Activated CD4-positive, alpha-beta T cell treated with anti-CD3 and anti-CD28 coated beads, Interleukin-2, amount 10 ng/mL, durations not matched to agents 7 days and 5 days (primary cell): ENCODE measurements at regions of chr19 and their contacts with region 1.

Region 1: GRCh38 chr19:14136509-14137281 is at the start of gene ASF1B:
- DNase-seq: peak; percentile 99
- H3K4me3 Mint-ChIP-seq: peak within 1 kb of the TSS; percentile 81
- H3K27ac Mint-ChIP-seq: peak within 1 kb of the TSS; percentile 93
- H3K4me1 Mint-ChIP-seq: peaks cover 44% of the 10 kb centered on the region
- H3K27me3 Mint-ChIP-seq: no peaks in the 10 kb centered on the region
- total RNA-seq, gene ASF1B: 119 to 131 TPM

Region 2: GRCh38 chr19:13861732-13862531 is 274.8 kb before region 1 on chr19:
- CTCF ChIA-PET with region 1: interaction called, 15 read pairs
- POLR2A ChIA-PET with region 1: no interaction called
- DNase-seq: peak; percentile 88
- H3K4me3 Mint-ChIP-seq: peak overlapping the region; percentile 80
- H3K27ac Mint-ChIP-seq: peak overlapping the region; percentile 85
- H3K4me1 Mint-ChIP-seq: peaks cover 44% of the 10 kb centered on the region
- H3K27me3 Mint-ChIP-seq: peaks cover 27% of the 10 kb centered on the region

Region 3: DNA sequence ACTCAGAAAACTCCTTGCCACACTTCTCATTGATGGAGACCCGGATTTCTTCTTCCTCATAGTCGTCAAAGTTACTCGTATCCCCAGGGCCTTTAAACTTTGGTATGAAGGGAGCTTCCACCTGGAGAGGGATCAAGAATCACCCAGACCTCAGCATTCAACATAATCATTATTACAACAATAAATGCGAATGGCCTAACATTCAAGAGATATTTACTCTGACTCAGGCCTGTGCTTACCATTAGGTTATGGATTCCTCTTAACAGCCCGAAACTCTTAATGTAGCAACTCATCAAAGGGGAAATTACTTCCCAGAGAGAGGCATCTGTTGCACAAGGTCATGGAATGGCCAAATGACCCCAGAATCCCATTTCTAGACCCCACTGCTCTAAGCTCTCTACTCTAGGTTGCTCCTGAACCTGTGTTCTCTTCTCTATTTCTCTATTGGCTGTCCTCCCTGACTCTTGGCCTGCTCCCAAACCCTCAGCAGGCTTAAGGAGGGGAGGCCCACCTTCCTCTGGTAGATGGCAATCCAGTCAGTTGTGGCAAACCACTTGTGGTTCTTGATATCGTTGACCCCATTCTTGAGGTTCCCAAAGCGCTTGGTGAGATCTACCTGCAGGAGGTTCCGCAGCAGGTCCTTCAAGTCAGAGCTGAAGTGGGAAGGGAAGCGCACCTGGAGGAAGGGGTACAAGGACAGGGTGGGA is 43.4 kb before region 1 on chr19:
- CTCF ChIA-PET with region 1: interaction called, 11 read pairs
- POLR2A ChIA-PET with region 1: interaction called, 3 read pairs
- DNase-seq: no peak
- H3K4me3 Mint-ChIP-seq: peak overlapping the region; percentile 45
- H3K27ac Mint-ChIP-seq: peak overlapping the region; percentile 61
- H3K4me1 Mint-ChIP-seq: peaks cover 24% of the 10 kb centered on the region
- H3K27me3 Mint-ChIP-seq: no peaks in the 10 kb centered on the region

Region 4: DNA sequence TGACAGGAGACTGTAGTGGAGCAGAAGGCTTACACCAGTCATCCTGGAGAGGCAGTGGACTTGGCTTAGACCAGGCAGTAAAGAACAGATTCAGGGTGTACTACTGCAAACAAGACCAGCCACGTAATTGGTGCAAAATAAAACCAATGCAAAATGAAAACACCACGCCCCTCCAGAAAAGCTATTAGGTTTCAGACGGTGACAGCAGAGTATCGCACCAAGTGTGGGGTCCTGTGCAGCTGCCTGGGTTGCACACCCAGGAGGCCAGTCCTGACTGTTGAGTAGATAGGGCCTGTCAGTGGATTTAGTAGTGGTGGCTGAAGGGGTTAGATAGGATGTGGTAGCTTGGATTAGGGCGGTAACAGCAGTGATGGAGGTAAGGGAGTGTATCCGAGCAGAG is 13.8 kb before region 1 on chr19:
- CTCF ChIA-PET with region 1: interaction called, 20 read pairs
- POLR2A ChIA-PET with region 1: no interaction called
- DNase-seq: no peak
- H3K4me3 Mint-ChIP-seq: no peak overlapping the region
- H3K27ac Mint-ChIP-seq: no peak overlapping the region
- H3K4me1 Mint-ChIP-seq: peaks cover 16% of the 10 kb centered on the region
- H3K27me3 Mint-ChIP-seq: no peaks in the 10 kb centered on the region

Region 5: GRCh38 chr19:14237014-14237941 is 100.6 kb after region 1 on chr19:
- CTCF ChIA-PET with region 1: no interaction called
- POLR2A ChIA-PET with region 1: no interaction called
- DNase-seq: no peak
- H3K4me3 Mint-ChIP-seq: no peak overlapping the region
- H3K27ac Mint-ChIP-seq: no peak overlapping the region
- H3K4me1 Mint-ChIP-seq: peaks cover 6% of the 10 kb centered on the region
- H3K27me3 Mint-ChIP-seq: peaks cover 3% of the 10 kb centered on the region

Region 6: GRCh38 chr19:14347999-14348889 is 211.5 kb after region 1 on chr19:
- CTCF ChIA-PET with region 1: interaction called, 15 read pairs
- POLR2A ChIA-PET with region 1: no interaction called
- DNase-seq: peak; percentile 64
- H3K4me3 Mint-ChIP-seq: peak overlapping the region; percentile 22
- H3K27ac Mint-ChIP-seq: peak overlapping the region; percentile 88
- H3K4me1 Mint-ChIP-seq: peaks cover 27% of the 10 kb centered on the region
- H3K27me3 Mint-ChIP-seq: no peaks in the 10 kb centered on the region

Region 7: DNA sequence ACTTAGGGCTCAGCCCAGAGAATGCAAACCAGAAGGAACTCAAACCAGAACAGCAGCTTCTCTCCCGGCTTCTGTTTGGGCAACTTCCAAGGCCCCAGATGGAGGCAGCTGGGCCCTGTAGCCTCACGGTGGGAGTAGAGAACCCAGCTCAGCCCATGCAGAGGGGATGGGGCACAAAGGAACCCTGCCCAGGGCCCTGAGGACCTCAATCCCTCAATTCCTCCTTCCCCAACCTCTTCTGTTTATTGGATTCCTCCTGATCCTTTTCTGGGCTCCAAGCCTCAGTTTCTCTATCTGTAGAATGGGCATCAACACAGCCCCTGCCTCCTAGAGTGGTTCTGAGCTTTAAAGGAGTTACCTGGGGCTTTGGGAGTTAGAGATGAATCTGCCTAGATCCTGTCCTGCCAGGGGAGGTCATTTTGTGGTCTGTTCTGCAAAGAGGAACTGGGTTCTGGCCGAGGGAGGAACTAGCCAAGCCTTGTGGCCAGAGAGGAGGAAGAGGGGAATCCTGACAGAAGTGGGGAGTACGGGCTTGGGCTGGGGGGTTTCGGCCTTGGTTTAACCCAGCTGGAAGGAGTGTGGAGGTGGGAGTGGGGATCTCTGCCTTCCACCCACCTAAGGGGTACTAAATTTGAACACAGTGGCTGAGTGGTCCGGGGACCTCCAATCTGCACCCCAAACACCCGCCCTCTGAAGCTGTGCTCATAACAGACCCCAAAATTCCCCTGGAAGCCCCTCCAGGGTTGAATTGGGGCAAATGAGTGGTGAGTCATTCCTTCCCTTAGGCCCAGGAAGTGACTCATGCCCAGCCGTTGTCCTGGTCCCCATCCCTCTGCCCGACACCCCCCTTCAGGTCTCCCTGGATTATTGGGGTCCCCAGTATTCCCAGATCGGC is 247.2 kb after region 1 on chr19:
- CTCF ChIA-PET with region 1: interaction called, 13 read pairs
- POLR2A ChIA-PET with region 1: no interaction called
- DNase-seq: peak; percentile 57
- H3K4me3 Mint-ChIP-seq: peak overlapping the region; percentile 99
- H3K27ac Mint-ChIP-seq: peak overlapping the region; percentile 98
- H3K4me1 Mint-ChIP-seq: peaks cover 44% of the 10 kb centered on the region
- H3K27me3 Mint-ChIP-seq: no peaks in the 10 kb centered on the region

Region 8: DNA sequence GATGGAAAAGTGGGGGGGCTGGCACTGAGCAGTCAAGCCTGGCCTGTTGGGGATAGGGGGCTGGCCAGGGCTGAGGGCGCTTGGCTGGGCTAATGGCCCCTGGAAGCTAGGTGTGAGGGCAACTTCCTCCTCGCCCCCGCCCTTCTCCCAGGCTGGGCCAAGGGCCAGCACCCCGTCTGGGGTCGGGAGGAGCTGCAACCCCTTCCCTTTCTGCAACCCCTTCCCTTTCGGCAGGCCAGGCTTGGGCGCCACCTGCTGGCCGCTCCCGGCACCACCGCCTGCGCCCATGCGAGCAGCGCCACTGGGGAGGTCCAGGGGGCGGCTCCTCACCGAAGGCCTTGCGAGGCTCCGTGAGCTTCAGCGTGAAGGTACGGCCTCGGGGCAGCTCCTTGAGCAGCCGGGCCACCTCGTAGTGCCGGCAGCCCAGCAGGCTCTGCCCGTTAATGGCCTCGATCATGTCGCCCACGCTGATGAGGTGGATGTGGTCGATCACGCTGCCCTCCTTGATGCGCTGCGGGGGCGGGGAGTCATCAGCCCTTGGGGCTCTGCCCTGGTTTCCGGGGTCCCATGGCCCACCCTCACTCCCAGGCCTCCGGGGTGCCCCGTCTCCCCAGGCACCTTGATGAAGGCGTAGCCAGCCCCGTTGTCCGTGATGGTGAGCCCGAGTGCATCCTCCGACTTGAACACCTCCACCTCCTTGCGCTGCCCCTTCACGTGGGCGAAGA is 343.4 kb after region 1 on chr19:
- CTCF ChIA-PET with region 1: interaction called, 13 read pairs
- POLR2A ChIA-PET with region 1: interaction called, 3 read pairs
- DNase-seq: peak; percentile 72
- H3K4me3 Mint-ChIP-seq: no peak overlapping the region
- H3K27ac Mint-ChIP-seq: no peak overlapping the region
- H3K4me1 Mint-ChIP-seq: peaks cover 16% of the 10 kb centered on the region
- H3K27me3 Mint-ChIP-seq: no peaks in the 10 kb centered on the region